ENCODE measurements at regions of chr10 and their contacts with region 1.

Region 1: DNA sequence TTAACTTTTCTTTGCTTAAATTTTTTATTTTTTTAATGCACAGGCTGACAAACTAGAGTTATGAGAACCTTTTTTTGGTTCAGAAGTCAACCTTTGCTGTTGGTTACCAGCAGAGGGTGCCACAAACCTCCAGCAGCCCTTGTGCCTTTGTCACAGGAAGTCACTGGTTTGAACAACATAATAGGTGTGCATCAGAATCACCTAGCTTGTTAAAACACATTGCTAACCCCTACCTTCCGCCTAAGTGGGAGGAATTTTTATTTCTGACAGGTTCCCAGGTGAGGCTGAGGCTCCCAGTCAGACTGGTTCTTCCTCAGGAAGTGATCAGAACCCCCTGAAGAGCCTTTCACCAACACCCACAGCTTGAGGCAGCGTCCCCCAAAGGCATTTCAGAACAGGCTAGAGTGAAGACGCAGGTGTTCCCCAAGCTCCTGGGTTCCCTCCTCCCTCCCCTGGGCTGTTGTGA is 22.6 kb upstream of the VDAC2 start:
- DNase-seq: peak; percentile 65 to 83
- ATAC-seq: peak; percentile 32 to 41; a peak in 3 of 6 replicates
- H3K4me3 ChIP-seq: no peak overlapping the region
- H3K27ac ChIP-seq: peak overlapping the region; percentile 67 to 90; a peak in 5 of 6 replicates
- H3K4me1 ChIP-seq: peaks cover 74% of the 10 kb centered on the region
- CTCF ChIP-seq: peak; percentile 72
- EP300 ChIP-seq: no peak
- POLR2A ChIP-seq: no peak
- RAD21 ChIP-seq: peak; percentile 81 to 91

Region 2: GRCh38 chr10:75159519-75159918 is 28.5 kb before region 1 on chr10:
- CTCF ChIA-PET with region 1: interaction called, 14 read pairs
- POLR2A ChIA-PET with region 1: no interaction called
- DNase-seq: no peak
- ATAC-seq: no peak
- H3K4me3 ChIP-seq: no peak overlapping the region
- H3K27ac ChIP-seq: no peak overlapping the region
- H3K4me1 ChIP-seq: no peaks in the 10 kb centered on the region
- CTCF ChIP-seq: no peak
- EP300 ChIP-seq: no peak
- POLR2A ChIP-seq: no peak
- RAD21 ChIP-seq: no peak

Region 3: DNA sequence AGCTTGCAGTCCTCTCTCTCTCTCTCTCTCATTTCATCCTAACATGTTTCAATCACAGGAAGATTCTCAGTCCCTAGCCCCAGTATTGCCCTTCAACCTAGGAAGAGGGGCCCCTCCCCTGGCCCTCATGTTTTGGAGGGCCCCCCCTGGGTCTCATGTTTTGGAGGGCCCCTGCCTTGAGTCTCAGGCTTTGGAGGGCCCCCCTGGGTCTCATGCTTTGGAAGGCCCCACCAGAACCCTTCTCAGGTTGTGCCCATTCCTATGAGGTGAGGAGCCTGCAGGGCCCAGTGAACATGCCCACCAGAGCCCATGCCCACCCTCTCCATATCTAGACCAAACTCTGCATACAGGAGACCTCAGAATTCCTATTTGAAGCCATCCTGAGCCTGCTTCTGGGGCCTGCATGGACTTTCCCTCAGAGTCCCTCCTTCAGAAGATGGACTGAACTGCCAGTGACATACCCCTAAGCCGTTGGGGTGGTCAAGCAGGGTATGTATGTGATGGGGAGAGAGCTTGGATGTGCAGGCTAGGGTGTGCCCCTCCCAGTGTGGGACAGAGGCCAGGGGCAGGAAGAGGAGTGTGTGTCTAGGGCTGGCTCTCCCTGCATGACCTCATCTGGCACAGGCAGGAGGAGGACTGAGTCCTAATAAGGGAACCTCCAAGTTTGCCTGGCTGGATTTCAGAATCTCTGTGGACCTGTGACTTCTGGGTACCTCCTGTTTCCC is 14.5 kb after region 1 on chr10:
- CTCF ChIA-PET with region 1: interaction called, 90 read pairs
- POLR2A ChIA-PET with region 1: no interaction called
- DNase-seq: peak; percentile 40 to 81
- ATAC-seq: peak; percentile 79 to 90; a peak in 5 of 6 replicates
- H3K4me3 ChIP-seq: no peak overlapping the region
- H3K27ac ChIP-seq: peak overlapping the region; percentile 80 to 84
- H3K4me1 ChIP-seq: peaks cover 50% of the 10 kb centered on the region
- CTCF ChIP-seq: no peak
- EP300 ChIP-seq: no peak
- POLR2A ChIP-seq: no peak
- RAD21 ChIP-seq: no peak

Region 4: GRCh38 chr10:75210282-75211006 is 22.4 kb after region 1 on chr10 and contains the start of gene VDAC2:
- CTCF ChIA-PET with region 1: interaction called, 90 read pairs
- POLR2A ChIA-PET with region 1: interaction called, 25 read pairs
- DNase-seq: peak; percentile 77 to 93
- ATAC-seq: peak; percentile 85 to 88
- H3K4me3 ChIP-seq: peak within 1 kb of the TSS; percentile 83
- H3K27ac ChIP-seq: peak within 1 kb of the TSS; percentile 99
- H3K4me1 ChIP-seq: peaks cover 57% of the 10 kb centered on the region
- CTCF ChIP-seq: no peak
- EP300 ChIP-seq: peak in 1 of 2 experiments; percentile 29; a peak in 1 of 5 replicates
- POLR2A ChIP-seq: peak; percentile 67
- RAD21 ChIP-seq: no peak; a peak in 2 of 5 replicates
- polyA plus RNA-seq, gene VDAC2: 262 and 285 TPM in 2 replicates

Region 5: DNA sequence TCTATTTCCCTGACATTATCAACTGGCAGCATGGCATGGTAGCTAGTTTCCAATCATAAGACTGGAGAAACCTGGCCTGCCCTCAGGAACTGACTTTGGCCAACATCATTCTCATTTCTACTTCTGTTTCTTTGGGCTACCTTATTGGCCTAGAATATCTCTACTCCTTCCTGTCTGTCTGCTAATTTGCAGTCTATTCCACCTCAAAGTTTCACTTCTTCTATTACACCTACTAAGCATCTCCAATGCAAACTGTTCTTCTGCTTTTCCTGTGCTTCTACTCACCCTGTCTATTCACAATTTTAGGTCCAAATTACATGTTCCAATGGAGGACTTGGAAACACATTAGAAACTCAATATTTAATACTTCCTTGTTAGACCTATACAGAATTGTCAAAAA is 148.0 kb after region 1 on chr10:
- CTCF ChIA-PET with region 1: no interaction called
- POLR2A ChIA-PET with region 1: no interaction called
- DNase-seq: no peak
- ATAC-seq: no peak
- H3K4me3 ChIP-seq: no peak overlapping the region
- H3K27ac ChIP-seq: no peak overlapping the region
- H3K4me1 ChIP-seq: no peaks in the 10 kb centered on the region
- CTCF ChIP-seq: no peak
- EP300 ChIP-seq: no peak
- POLR2A ChIP-seq: no peak
- RAD21 ChIP-seq: no peak